MCF 10A (cell line): ENCODE measurements at regions of chr18 and their contacts with region 1.

Region 1: GRCh38 chr18:1585879-1586488 is 681.3 kb downstream of the ADCYAP1 start:
- DNase-seq: peak; percentile 45
- H3K4me3 Mint-ChIP-seq: no peak overlapping the region
- H3K27ac Mint-ChIP-seq: no peak overlapping the region
- H3K4me1 Mint-ChIP-seq: peaks cover 5% of the 10 kb centered on the region
- H3K27me3 Mint-ChIP-seq: no peaks in the 10 kb centered on the region
- CTCF ChIP-seq: peak; percentile 39

Region 2: GRCh38 chr18:1488956-1489355 is 97.0 kb before region 1 on chr18:
- CTCF ChIA-PET with region 1: no interaction called
- POLR2A ChIA-PET with region 1: no interaction called
- intact Hi-C with region 1: no loop called
- DNase-seq: peak; percentile 8
- H3K4me3 Mint-ChIP-seq: no peak overlapping the region
- H3K27ac Mint-ChIP-seq: no peak overlapping the region
- H3K4me1 Mint-ChIP-seq: peaks cover 5% of the 10 kb centered on the region
- H3K27me3 Mint-ChIP-seq: no peaks in the 10 kb centered on the region
- CTCF ChIP-seq: no peak

Region 3: DNA sequence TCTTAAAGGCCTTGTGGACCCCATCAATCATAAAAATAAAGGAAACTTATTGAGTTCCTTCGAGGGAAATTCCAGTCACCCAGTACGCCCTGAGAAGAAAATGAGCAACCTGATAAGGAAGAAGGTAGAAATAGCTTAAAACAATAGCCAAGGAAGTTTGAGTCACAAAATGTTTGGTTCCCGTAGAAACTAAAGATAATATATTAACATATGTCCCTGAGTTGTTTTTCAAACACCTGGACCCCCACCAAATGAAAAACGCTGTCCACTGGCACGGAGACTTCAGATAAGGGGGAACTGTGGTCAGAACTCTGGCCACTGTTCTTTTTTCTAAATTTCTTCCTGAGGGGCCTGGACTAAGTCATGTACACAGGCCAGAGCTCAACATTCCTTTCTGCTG is 12.3 kb before region 1 on chr18:
- CTCF ChIA-PET with region 1: interaction called, 21 read pairs
- POLR2A ChIA-PET with region 1: no interaction called
- intact Hi-C with region 1: no loop called
- DNase-seq: no peak
- H3K4me3 Mint-ChIP-seq: no peak overlapping the region
- H3K27ac Mint-ChIP-seq: peak overlapping the region; percentile 5
- H3K4me1 Mint-ChIP-seq: no peaks in the 10 kb centered on the region
- H3K27me3 Mint-ChIP-seq: no peaks in the 10 kb centered on the region
- CTCF ChIP-seq: no peak

Region 4: DNA sequence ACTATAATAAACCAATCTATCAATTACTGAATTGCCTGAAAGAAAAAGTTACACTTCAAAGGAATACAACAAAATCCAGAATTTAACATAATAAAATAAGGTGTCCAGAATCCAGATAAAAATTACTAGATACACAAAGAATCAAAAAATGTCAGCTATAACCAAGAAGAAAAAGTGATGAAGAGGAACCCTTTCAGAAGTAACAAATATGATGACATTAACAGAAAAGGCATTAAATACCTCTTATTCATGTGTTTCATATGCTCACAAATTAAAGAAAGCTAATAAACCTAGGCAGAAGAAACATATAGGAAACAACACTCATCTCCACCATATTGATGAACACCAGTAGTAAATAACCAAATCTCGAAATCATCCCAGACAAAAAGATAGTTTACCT is 41.5 kb after region 1 on chr18:
- CTCF ChIA-PET with region 1: no interaction called
- POLR2A ChIA-PET with region 1: no interaction called
- intact Hi-C with region 1: no loop called
- DNase-seq: no peak
- H3K4me3 Mint-ChIP-seq: no peak overlapping the region
- H3K27ac Mint-ChIP-seq: no peak overlapping the region
- H3K4me1 Mint-ChIP-seq: no peaks in the 10 kb centered on the region
- H3K27me3 Mint-ChIP-seq: no peaks in the 10 kb centered on the region
- CTCF ChIP-seq: no peak

Region 5: DNA sequence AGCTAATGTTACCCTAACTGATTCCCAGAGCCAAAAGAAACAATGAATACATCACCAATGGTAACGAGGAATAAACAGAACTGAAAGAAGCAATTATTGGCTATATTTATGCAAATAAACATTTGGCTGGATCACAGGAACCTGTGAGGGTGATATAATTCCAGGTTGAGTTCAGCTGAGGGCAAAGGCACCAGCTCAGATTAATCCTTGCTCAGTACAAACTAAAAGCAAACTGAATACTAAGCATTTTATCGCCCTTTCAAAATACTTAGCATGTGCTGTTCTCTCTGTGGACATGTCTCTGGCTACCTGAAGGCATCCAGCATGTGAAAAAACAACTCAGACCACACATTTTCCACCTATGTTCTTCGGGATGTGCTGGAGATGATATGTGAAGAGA is 193.6 kb after region 1 on chr18:
- CTCF ChIA-PET with region 1: no interaction called
- POLR2A ChIA-PET with region 1: no interaction called
- intact Hi-C with region 1: no loop called
- DNase-seq: no peak
- H3K4me3 Mint-ChIP-seq: no peak overlapping the region
- H3K27ac Mint-ChIP-seq: no peak overlapping the region
- H3K4me1 Mint-ChIP-seq: peaks cover 11% of the 10 kb centered on the region
- H3K27me3 Mint-ChIP-seq: no peaks in the 10 kb centered on the region
- CTCF ChIP-seq: no peak